ENCODE measurements at regions of chr15 and their contacts with region 1.

Region 1: DNA sequence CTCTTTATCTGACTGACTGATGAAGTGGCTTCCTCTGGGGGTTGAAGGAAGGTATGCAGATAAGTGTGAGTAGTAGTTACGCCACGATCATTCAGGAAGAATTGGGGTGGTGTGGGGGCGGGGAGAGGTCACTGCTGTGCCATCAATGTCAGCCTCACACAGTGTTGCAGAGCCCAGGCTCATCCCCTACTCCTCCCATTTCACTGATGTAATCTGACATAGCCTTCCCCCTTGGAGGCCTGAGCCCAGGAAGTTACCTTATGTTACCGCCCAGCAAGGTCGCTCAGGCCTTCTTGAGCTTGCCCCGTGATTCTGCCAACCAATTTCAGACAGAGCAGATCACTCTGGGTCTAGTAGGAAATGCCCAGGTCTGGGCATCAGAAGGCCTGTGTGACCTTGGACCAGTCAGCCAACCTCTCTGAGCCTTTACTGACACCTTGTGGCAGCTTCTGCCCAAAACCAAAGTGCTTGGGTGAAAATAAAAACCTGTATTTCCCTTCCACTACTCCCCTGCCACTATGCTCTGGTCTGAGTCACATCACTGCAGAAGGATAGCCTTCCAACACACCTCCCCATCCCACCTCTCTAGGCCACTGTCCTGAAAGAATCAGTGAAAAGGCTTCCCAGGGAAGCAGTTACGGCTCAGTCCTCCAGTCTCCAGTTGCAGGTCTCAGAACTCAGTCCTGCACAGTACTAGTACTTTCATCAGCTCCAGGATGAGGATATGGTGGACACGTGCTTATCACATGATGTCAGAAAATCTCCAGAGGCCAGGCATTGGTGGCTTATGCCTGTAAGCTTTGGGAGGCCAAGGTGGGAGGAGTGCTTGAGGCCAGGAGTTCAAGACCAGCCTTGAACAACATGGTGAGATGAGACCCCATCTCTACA is 28.1 kb upstream of the INSYN1 start:
- DNase-seq: no peak
- ATAC-seq: peak in 1 of 4 donors; percentile 24
- H3K4me3 ChIP-seq: no peak overlapping the region
- H3K27ac ChIP-seq: no peak overlapping the region
- H3K4me1 ChIP-seq: no peaks in the 10 kb centered on the region
- H3K27me3 ChIP-seq: no peaks in the 10 kb centered on the region
- CTCF ChIP-seq: no peak

Region 2: GRCh38 chr15:73021139-73021621 is 760.1 kb before region 1 on chr15:
- intact Hi-C with region 1: loop called in 1 of 2 experiments (anchors 10 kb)
- DNase-seq: no peak
- ATAC-seq: no peak
- H3K4me3 ChIP-seq: no peak overlapping the region
- H3K27ac ChIP-seq: no peak overlapping the region
- H3K4me1 ChIP-seq: no peaks in the 10 kb centered on the region
- H3K27me3 ChIP-seq: no peaks in the 10 kb centered on the region
- CTCF ChIP-seq: no peak

Region 3: GRCh38 chr15:73746883-73747282 is 34.4 kb before region 1 on chr15:
- intact Hi-C with region 1: no loop called
- DNase-seq: no peak
- ATAC-seq: peak; percentile 46 to 61 (median 56)
- H3K4me3 ChIP-seq: no peak overlapping the region
- H3K27ac ChIP-seq: no peak overlapping the region
- H3K4me1 ChIP-seq: peaks cover 6% of the 10 kb centered on the region
- H3K27me3 ChIP-seq: peaks cover 0 to 22% (median 3%) of the 10 kb centered on the region in 3 donors
- CTCF ChIP-seq: no peak